Activated CD4-positive, alpha-beta T cell treated with anti-CD3 and anti-CD28 coated beads, Interleukin-2, amount 10 ng/mL, durations not matched to agents 24 days and 14 days (primary cell): ENCODE measurements at regions of chr4 and their contacts with region 1.

Region 1: DNA sequence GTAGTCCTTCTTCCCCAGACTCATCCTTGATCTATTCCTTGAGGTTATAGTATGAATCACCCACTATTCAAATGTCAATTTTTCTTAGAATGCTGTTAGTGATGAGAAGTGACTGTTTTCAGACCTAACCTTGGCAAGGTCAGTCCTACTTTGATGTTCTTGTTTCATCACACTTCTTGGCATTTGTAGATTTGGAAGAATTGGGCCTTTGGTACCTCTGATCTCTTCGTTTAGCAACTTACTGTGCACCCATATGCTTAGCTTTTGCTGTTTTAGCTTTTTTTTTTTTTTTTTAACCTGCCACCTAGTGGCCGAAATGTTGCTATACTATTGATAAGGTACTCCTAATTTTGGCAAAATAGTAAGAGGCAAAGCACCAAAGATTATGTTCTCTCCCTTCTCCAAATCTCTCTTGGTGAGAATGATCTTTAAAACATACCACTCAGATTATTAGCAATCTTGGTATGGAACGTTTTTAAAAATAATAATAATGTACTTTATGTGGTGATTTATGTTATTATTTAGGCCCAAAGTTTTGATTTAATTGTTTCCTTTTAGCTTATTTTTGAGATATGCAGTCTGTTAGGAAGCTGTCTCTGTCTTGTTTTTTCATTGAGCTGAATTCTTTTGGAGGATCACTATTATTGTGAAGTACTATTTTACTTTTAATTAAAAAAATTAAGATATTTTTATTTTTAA is 16.6 kb downstream of the DCK start:
- DNase-seq: peak; percentile 81
- H3K4me3 Mint-ChIP-seq: peak overlapping the region; percentile 3
- H3K27ac Mint-ChIP-seq: peak overlapping the region; percentile 83
- H3K4me1 Mint-ChIP-seq: peaks cover 40% of the 10 kb centered on the region
- H3K27me3 Mint-ChIP-seq: no peaks in the 10 kb centered on the region

Region 2: DNA sequence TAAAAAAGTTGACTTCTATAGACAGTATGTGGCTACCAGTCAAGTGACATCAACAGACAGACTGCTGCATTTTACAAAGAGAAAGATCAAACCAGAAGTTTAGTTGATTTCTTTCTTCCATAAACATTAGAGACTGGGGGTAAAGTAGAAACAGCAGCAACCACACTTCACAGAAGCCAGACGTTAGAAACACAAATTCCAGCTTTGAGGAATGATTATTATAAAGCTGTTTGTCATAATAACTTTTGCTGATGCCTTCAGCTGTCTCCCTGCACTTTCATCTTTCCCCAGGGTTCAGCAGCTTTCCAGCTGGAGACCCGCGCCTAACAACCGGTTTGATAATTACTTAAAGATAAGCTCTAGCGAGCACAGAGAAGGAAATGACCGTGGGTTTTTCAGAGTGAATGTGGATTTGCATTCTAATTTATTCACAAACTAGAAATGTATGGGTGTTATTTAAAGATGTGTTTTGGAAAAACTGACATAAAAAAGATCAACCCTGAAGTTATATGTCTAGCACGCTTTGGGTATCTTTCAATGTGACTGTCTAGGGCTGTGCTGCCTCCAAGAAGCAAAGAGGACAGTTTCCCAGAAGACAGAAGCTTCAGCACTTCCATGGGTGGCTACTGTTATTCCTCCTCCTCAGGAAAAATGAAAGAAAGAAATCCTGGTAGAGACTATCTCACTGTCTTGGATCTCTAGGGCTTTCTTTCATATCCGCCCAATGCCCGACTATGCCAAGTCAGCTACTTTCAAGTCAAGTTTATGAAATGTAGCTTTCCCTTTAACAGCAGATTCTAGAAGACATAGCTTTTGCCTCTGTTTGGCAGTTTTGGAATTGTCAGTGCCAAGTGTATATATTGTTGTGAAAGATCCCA is 396.5 kb before region 1 on chr4:
- intact Hi-C with region 1: loop called (anchors 10 kb)
- DNase-seq: peak; percentile 41
- H3K4me3 Mint-ChIP-seq: no peak overlapping the region
- H3K27ac Mint-ChIP-seq: no peak overlapping the region
- H3K4me1 Mint-ChIP-seq: no peaks in the 10 kb centered on the region
- H3K27me3 Mint-ChIP-seq: peaks cover 28% of the 10 kb centered on the region

Region 3: DNA sequence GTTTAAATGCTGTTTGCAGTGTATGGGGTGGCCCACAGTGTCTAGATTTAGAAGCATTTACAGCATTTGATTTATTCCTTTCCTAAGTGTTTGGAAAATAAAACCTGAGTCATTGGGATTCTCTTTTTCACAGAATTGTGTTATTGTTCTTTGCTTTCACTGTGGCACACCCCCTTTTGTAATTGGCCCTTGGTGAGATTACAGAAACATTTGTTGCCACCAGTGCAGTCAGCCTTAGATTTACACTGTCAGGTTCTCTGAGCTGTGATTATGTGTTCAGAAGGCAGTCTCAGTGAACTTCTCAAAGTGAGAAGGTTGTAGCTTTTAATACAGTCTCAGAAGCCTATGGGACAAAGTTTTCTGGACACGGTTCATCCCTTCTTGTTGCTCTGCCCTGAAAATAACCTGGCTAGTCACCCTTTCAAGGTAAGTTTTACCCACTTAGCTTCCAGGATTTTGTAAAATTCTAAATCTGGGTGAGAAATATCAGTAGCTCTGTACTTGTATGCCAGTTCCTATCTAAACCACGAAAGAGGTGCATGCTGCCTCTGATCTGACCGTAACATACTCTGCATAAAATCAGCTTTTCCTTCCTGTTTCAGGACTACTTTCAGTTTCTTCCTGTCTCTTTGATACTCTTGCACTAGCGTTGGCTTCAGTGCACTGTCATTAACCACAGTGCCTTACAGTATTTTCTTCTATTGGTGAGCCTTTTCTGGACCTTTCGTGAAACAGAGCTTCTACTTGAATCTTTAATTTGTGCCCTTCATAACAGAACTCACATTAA is 275.7 kb before region 1 on chr4:
- intact Hi-C with region 1: no loop called
- DNase-seq: peak; percentile 85
- H3K4me3 Mint-ChIP-seq: peak overlapping the region; percentile 73
- H3K27ac Mint-ChIP-seq: peak overlapping the region; percentile 48
- H3K4me1 Mint-ChIP-seq: peaks cover 33% of the 10 kb centered on the region
- H3K27me3 Mint-ChIP-seq: no peaks in the 10 kb centered on the region